SK-N-SH (cell line): ENCODE measurements at regions of chr6 and their contacts with region 1.

Region 1: GRCh38 chr6:34610819-34611477 is 54.8 kb upstream of the SPDEF start:
- DNase-seq: no peak
- H3K4me3 ChIP-seq: no peak overlapping the region
- H3K27ac ChIP-seq: peak overlapping the region in 1 of 2 experiments; percentile 59; a peak in 2 of 4 replicates
- H3K4me1 ChIP-seq: peaks cover 0 to 14% of the 10 kb centered on the region in 2 experiments; a peak in 2 of 4 replicates
- H3K27me3 ChIP-seq: no peaks in the 10 kb centered on the region
- CTCF ChIP-seq: no peak
- EP300 ChIP-seq: no peak
- RAD21 ChIP-seq: no peak

Region 2: GRCh38 chr6:34161857-34162515 is 449.0 kb before region 1 on chr6:
- CTCF ChIA-PET with region 1: interaction called, 13 read pairs
- POLR2A ChIA-PET with region 1: no interaction called
- DNase-seq: peak; percentile 4
- H3K4me3 ChIP-seq: no peak overlapping the region
- H3K27ac ChIP-seq: no peak overlapping the region
- H3K4me1 ChIP-seq: no peaks in the 10 kb centered on the region
- H3K27me3 ChIP-seq: no peaks in the 10 kb centered on the region
- CTCF ChIP-seq: no peak
- EP300 ChIP-seq: no peak
- RAD21 ChIP-seq: no peak

Region 3: GRCh38 chr6:34248727-34249551 is 362.0 kb before region 1 on chr6 and contains the start of gene SMIM29:
- CTCF ChIA-PET with region 1: interaction called, 45 read pairs
- POLR2A ChIA-PET with region 1: no interaction called
- DNase-seq: peak; percentile 98
- H3K4me3 ChIP-seq: peak within 1 kb of the TSS; percentile 72 to 89
- H3K27ac ChIP-seq: peak within 1 kb of the TSS; percentile 78 to 97
- H3K4me1 ChIP-seq: peaks cover 21 to 22% of the 10 kb centered on the region in 2 experiments; a peak in 3 of 4 replicates
- H3K27me3 ChIP-seq: no peaks in the 10 kb centered on the region
- CTCF ChIP-seq: peak; percentile 77
- EP300 ChIP-seq: no peak
- RAD21 ChIP-seq: peak; percentile 79
- polyA plus RNA-seq, gene SMIM29: 50.2 and 52.2 TPM in 2 replicates

Region 4: GRCh38 chr6:34465531-34466241 is 145.3 kb before region 1 on chr6 and contains the start of gene PACSIN1:
- CTCF ChIA-PET with region 1: interaction called, 74 read pairs
- POLR2A ChIA-PET with region 1: no interaction called
- DNase-seq: peak; percentile 77
- H3K4me3 ChIP-seq: peak within 1 kb of the TSS in 1 of 2 experiments; percentile 47; a peak in 3 of 4 replicates
- H3K27ac ChIP-seq: no peak within 1 kb of the TSS
- H3K4me1 ChIP-seq: peaks cover 0 to 8% of the 10 kb centered on the region in 2 experiments; a peak in 1 of 4 replicates
- H3K27me3 ChIP-seq: no peaks in the 10 kb centered on the region; the same call in 1 of the 2 replicates
- CTCF ChIP-seq: no peak
- EP300 ChIP-seq: no peak
- RAD21 ChIP-seq: no peak
- polyA plus RNA-seq, gene PACSIN1: 0.02 and 0.05 TPM in 2 replicates

Region 5: DNA sequence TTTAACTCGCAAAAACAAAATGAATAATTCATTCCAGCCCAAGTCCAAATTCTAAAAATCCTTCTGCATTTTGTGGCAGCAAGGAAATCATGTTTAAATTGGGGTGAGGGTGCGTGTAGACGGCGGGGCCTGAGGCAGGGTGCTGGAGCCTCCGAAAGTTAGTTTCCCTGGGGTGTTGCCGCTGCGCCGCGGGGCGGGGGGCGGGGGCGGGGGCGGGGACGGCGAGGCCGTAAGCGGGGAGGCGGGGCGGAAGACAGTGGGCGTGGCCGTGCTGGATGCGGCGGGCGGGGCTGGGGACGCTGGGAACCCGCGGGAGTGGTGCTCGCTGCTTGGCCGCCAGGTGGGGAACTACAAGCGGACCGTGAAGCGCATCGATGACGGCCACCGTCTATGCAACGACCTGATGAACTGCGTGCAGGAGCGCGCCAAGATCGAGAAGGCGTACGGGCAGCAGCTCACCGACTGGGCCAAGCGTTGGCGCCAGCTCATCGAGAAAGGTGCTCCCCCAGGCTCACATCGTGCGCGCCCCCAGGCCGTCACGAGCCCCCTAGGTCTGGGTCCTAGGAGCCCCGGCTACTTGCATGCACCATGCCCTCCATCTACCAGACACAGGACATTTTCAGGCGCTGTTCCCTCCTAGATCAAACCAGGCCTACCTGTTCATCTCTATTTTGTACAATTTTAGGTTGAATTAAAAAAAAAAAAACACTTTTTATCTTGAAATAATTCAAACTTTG is 83.8 kb before region 1 on chr6:
- CTCF ChIA-PET with region 1: interaction called, 36 read pairs
- POLR2A ChIA-PET with region 1: no interaction called
- DNase-seq: peak; percentile 98
- H3K4me3 ChIP-seq: peak overlapping the region; percentile 34 to 53; a peak in 3 of 4 replicates
- H3K27ac ChIP-seq: no peak overlapping the region
- H3K4me1 ChIP-seq: peaks cover 4 to 27% of the 10 kb centered on the region in 2 experiments; a peak in 1 of 4 replicates
- H3K27me3 ChIP-seq: no peaks in the 10 kb centered on the region
- CTCF ChIP-seq: peak; percentile 60
- EP300 ChIP-seq: no peak
- RAD21 ChIP-seq: peak; percentile 68

Region 6: GRCh38 chr6:34570066-34570833 is 40.7 kb before region 1 on chr6:
- CTCF ChIA-PET with region 1: interaction called, 14 read pairs
- POLR2A ChIA-PET with region 1: no interaction called
- DNase-seq: no peak
- H3K4me3 ChIP-seq: no peak overlapping the region
- H3K27ac ChIP-seq: no peak overlapping the region
- H3K4me1 ChIP-seq: no peaks in the 10 kb centered on the region; a peak in 1 of 4 replicates
- H3K27me3 ChIP-seq: no peaks in the 10 kb centered on the region
- CTCF ChIP-seq: no peak
- EP300 ChIP-seq: no peak
- RAD21 ChIP-seq: no peak